Activated CD4-positive, alpha-beta memory T cell treated with anti-CD3 and anti-CD28 coated beads for 36 hours (primary cell): ENCODE measurements at regions of chr17 and their contacts with region 1.

Region 1: GRCh38 chr17:40564883-40565768 is at the start of gene CCR7:
- DNase-seq: peak; percentile 92
- H3K4me3 Mint-ChIP-seq: peak within 1 kb of the TSS; percentile 93
- H3K27ac Mint-ChIP-seq: peak within 1 kb of the TSS; percentile 96
- H3K4me1 Mint-ChIP-seq: peaks cover 60% of the 10 kb centered on the region
- H3K27me3 Mint-ChIP-seq: no peaks in the 10 kb centered on the region
- total RNA-seq, gene CCR7: 137 to 145 TPM

Region 2: GRCh38 chr17:40264458-40265185 is 300.5 kb before region 1 on chr17:
- CTCF ChIA-PET with region 1: no interaction called
- POLR2A ChIA-PET with region 1: no interaction called
- intact Hi-C with region 1: no loop called
- DNase-seq: no peak
- H3K4me3 Mint-ChIP-seq: no peak overlapping the region
- H3K27ac Mint-ChIP-seq: no peak overlapping the region
- H3K4me1 Mint-ChIP-seq: peaks cover 10% of the 10 kb centered on the region
- H3K27me3 Mint-ChIP-seq: no peaks in the 10 kb centered on the region

Region 3: DNA sequence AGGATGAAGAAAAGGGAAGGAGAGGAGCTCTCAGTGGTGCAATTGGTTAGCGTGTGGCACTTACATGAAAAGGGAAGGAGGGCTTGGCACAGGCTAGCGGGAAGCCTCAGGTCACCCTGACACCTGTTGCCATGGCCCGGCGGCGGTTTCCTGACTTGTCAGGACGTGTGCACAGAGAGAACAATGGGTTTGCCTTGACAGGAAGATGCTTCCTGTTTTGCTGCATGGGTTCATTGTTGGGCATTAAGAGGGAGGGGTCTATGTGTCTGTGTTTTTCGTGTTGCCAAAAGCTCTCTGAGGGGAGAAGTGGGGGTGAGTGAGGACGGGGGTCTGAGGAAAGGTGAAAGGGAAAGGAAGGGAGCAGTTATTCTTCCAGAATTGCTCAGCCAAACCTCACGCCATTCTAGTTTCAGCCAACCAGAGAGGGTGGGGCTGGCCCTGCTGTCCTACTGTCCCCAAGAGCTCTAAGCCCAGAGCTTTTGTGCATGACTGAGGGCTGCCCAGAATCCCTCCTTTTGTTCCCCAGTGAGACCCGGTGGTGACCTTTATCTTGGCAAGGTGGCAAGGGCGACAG is 17.3 kb after region 1 on chr17:
- CTCF ChIA-PET with region 1: interaction called, 9 read pairs
- POLR2A ChIA-PET with region 1: interaction called, 27 read pairs
- intact Hi-C with region 1: loop called (anchors 1 kb)
- DNase-seq: peak; percentile 82
- H3K4me3 Mint-ChIP-seq: peak overlapping the region; percentile 38
- H3K27ac Mint-ChIP-seq: peak overlapping the region; percentile 21
- H3K4me1 Mint-ChIP-seq: peaks cover 82% of the 10 kb centered on the region
- H3K27me3 Mint-ChIP-seq: no peaks in the 10 kb centered on the region

Region 4: DNA sequence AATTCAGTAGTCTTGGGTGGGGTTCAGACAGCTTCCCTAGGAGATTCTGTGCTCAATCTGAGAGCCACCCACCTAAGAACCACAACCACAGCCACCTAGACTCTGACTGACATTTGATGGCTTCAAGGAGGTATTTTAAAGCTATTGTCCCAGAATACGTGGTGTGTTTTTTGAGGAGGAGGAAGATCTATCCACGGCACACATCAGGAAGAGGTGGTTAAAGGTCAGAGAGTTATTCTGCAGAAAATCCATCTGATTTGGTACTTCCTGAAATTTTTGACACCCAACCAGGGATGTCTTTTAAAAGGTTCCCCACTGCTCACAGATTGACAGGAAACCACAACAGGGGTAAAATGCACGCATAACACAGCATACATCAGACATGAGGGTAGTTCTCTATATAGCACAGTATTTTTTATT is 57.4 kb after region 1 on chr17:
- CTCF ChIA-PET with region 1: interaction called, 172 read pairs
- POLR2A ChIA-PET with region 1: interaction called, 16 read pairs
- intact Hi-C with region 1: no loop called
- DNase-seq: peak; percentile 38
- H3K4me3 Mint-ChIP-seq: no peak overlapping the region
- H3K27ac Mint-ChIP-seq: no peak overlapping the region
- H3K4me1 Mint-ChIP-seq: peaks cover 60% of the 10 kb centered on the region
- H3K27me3 Mint-ChIP-seq: no peaks in the 10 kb centered on the region

Region 5: GRCh38 chr17:40629842-40630241 is 64.7 kb after region 1 on chr17:
- CTCF ChIA-PET with region 1: interaction called, 15 read pairs
- POLR2A ChIA-PET with region 1: interaction called, 16 read pairs
- intact Hi-C with region 1: no loop called
- DNase-seq: no peak
- H3K4me3 Mint-ChIP-seq: no peak overlapping the region
- H3K27ac Mint-ChIP-seq: peak overlapping the region; percentile 43
- H3K4me1 Mint-ChIP-seq: peaks cover 22% of the 10 kb centered on the region
- H3K27me3 Mint-ChIP-seq: no peaks in the 10 kb centered on the region